ENCODE measurements at regions of chr4 and their contacts with region 1.

Region 1: DNA sequence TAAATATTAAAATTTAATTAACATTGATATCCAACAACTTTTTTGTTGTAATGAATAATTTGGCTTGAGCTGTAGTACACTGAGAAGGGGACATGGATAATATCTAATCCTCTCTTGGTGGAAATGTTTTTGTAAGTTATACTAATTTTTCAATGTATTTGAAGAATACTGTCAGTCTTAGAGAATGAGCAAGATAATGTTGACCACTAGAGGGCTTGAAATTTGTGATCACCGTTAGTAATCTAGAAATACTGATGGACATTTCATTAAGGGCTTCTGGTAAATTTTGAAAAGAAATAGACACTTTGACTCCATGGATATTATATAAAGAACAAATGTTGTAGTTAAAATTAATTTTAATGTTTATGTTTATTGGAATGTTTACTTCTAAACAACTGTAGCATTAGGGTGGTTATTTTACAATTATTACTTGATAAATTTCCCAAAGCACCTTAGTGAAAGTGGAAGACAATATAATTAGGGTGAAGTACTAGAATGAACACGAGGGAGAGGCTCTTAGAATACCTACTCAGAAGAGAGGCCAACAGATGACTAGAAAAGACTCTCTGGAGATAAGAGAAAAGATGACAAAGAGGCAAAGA is 20.0 kb upstream of the CAMK2D start:
- DNase-seq: no peak
- H3K4me3 ChIP-seq: no peak overlapping the region
- H3K27ac ChIP-seq: no peak overlapping the region
- H3K4me1 ChIP-seq: peaks cover 4% of the 10 kb centered on the region in 2 donors
- H3K27me3 ChIP-seq: no peaks in the 10 kb centered on the region
- CTCF ChIP-seq: peak; percentile 28 to 65 (median 59)

Region 2: GRCh38 chr4:113708250-113708649 is 73.3 kb before region 1 on chr4:
- intact Hi-C with region 1: no loop called
- DNase-seq: no peak
- H3K4me3 ChIP-seq: no peak overlapping the region
- H3K27ac ChIP-seq: no peak overlapping the region
- H3K4me1 ChIP-seq: peaks cover 0 to 2% of the 10 kb centered on the region in 2 donors
- H3K27me3 ChIP-seq: no peaks in the 10 kb centered on the region
- CTCF ChIP-seq: no peak

Region 3: GRCh38 chr4:113881256-113881655 is 99.7 kb after region 1 on chr4:
- intact Hi-C with region 1: loop called (anchors 10 kb)
- DNase-seq: no peak
- H3K4me3 ChIP-seq: no peak overlapping the region
- H3K27ac ChIP-seq: peak overlapping the region; percentile 57 to 69
- H3K4me1 ChIP-seq: peaks cover 0 to 15% of the 10 kb centered on the region in 2 donors
- H3K27me3 ChIP-seq: no peaks in the 10 kb centered on the region
- CTCF ChIP-seq: no peak

Measured in ascending aorta (tissue), 2 donors.